GM10248 (cell line): ENCODE measurements at regions of chr10 and their contacts with region 1.

Region 1: DNA sequence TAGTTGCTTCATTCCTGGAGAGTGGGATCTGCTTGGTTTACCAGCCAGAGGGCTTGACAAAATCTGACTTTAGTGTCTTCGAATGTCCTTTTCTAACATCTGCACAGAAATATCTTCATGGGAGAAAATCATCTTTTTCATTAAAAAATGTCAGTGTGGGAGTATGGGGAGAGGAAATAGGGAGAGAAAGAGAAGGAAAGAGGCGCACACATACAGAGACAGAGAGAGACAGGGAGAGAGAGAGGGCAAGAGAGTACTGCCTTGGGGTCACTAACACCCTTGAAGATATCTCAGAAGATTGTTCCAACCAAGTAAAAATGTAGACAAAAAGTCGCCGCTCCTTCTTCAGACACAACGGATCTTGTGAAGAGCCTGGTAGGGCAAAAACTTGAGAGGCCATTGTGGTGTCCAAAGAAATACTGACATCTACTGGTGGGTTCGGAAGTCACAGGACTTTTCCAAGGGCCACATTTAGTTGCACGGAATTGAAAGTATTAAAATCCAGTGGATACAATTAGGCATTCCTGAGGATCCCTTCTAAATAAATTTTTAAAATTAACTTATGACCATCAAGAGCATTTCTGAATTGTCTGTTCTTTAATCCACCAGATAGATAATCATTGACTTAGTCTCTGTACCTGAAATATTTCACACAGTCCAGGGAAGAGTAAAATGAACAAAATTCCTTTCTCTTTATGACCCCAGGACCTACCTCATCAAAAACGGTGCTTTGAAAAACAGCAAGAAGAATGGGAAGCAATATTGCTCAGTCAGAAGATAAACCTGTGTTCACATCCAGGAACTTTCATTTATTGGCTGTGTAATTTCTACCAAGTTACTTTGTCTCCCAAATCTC is 29.7 kb downstream of the VIM start:
- DNase-seq: peak; percentile 45
- CTCF ChIP-seq: peak; percentile 64

Region 2: GRCh38 chr10:16843252-16843870 is 414.3 kb before region 1 on chr10:
- CTCF ChIA-PET with region 1: interaction called, 16 read pairs
- POLR2A ChIA-PET with region 1: no interaction called
- DNase-seq: peak; percentile 22
- CTCF ChIP-seq: peak; percentile 33

Region 3: GRCh38 chr10:17273403-17273802 is 15.7 kb after region 1 on chr10:
- CTCF ChIA-PET with region 1: interaction called, 14 read pairs
- POLR2A ChIA-PET with region 1: no interaction called
- DNase-seq: no peak
- CTCF ChIP-seq: no peak